ENCODE measurements at regions of chr1 and their contacts with region 1.

Region 1: DNA sequence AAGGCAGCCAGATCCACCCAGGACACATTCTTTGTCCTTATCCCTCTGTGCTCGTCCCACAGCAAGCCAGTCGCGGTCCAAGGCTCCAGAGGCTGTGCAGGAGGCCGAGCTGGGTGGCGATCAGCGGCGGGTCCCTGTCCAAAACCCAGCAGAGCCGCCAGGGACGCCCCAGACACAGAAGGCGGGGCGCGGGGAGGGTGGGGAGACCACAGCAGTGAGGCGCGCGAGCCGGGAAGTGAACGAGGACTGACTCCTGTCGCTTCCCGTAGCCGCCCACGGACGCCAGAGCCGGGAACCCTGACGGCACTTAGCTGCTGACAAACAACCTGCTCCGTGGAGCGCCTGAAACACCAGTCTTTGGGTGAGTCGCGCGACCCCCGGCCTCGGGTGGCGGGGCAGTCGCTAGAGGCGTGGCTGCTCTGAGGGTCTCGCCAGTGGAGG is at the start of gene LGALS8:
- DNase-seq: peak; percentile 68 to 87 (median 83)
- ATAC-seq: peak; percentile 90
- H3K4me3 ChIP-seq: peak within 1 kb of the TSS; percentile 70
- H3K4me3 Mint-ChIP-seq: peak within 1 kb of the TSS; percentile 93 to 100 (median 99)
- H3K27ac ChIP-seq: peak within 1 kb of the TSS; percentile 87
- H3K27ac Mint-ChIP-seq: peak within 1 kb of the TSS; percentile 97 to 99 (median 98)
- H3K4me1 ChIP-seq: peaks cover 4 to 5% of the 10 kb centered on the region in 2 donors
- H3K4me1 Mint-ChIP-seq: peaks cover 8 to 38% (median 35%) of the 10 kb centered on the region in 7 donors
- H3K27me3 ChIP-seq: no peaks in the 10 kb centered on the region
- H3K27me3 Mint-ChIP-seq: peaks cover 0 to 3% (median 0%) of the 10 kb centered on the region in 5 donors
- total RNA-seq, gene LGALS8: 114 to 143 (median 134) TPM

Region 2: DNA sequence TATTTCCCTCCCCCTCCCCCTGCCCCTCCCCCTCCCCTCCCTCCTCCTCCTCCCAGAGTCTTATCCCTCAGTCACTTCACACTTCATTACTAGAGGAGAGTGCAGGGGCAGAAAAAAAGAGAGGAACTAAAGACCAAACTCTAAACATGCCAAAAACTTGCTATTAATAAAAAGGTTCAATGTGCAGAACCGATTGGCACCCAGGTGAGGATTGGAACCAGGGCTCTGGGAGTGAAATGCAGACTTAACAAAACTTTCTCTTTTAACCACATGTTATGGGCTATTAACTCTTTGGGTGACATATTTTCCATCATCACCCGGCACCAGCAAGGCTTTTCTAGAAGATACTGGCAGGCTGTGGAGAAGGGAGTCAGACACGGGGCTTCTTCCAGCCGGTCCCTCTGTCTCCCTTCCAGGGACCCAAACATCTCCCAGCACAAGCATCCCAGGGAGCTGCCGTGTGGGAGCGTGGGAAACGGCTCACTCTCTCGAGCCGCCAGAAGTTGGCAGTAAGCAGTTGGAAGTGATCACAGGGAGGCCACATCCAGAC is 472.4 kb before region 1 on chr1:
- CTCF ChIA-PET with region 1: no interaction called
- POLR2A ChIA-PET with region 1: no interaction called
- intact Hi-C with region 1: no loop called
- DNase-seq: no peak
- ATAC-seq: no peak
- H3K4me3 ChIP-seq: no peak overlapping the region
- H3K4me3 Mint-ChIP-seq: no peak overlapping the region
- H3K27ac ChIP-seq: no peak overlapping the region
- H3K27ac Mint-ChIP-seq: no peak overlapping the region
- H3K4me1 ChIP-seq: no peaks in the 10 kb centered on the region
- H3K4me1 Mint-ChIP-seq: peaks cover 0 to 5% (median 0%) of the 10 kb centered on the region in 7 donors
- H3K27me3 ChIP-seq: peaks cover 0 to 3% of the 10 kb centered on the region in 2 donors
- H3K27me3 Mint-ChIP-seq: peaks cover 14 to 32% (median 20%) of the 10 kb centered on the region in 5 donors

Region 3: DNA sequence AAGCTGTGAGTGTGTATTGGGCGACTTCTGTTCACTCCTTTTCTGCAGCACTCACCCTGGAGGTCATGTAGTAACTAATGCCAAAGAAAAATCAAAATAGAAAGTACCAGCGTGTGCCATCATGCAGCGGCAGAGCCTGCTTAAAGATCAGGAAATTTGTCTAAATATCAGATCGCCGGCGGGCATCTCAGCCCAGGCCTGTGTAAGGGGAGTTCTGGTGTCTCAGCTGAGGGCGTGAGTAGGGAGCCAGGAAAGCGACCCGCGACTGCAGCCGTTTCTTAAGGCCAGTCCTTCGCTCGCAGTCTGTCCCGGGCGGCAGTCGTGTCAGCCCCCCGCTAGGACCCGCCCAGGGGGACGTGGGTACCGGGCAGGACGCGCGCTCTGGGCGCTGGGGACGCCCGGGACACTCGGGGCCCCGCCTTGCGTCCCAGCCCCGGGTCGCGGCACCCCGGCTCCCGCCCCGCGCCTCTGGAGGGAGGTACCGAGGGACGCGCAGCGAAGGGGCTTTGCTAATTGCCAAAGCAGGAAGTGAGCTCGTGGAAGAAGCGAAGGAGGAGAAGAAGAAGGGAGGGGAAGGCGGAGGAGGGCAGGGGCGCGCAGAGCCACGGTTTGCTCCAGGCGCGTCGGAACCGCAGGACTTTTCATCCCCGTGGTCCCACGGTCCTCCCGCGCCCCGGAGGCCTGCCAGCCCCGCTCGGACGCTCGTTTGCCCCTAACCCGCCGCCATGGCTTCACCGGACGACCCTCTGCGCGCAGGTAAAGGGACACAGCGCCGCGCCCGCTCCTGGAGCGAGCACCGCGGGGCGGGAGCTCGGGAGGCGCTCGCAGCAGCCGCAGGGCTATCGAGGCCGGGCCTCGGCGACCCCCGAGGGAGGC is 128.6 kb before region 1 on chr1:
- CTCF ChIA-PET with region 1: no interaction called
- POLR2A ChIA-PET with region 1: no interaction called
- intact Hi-C with region 1: loop called in 1 of 2 experiments (anchors 2 kb)
- DNase-seq: peak in 3 of 9 donors; percentile 13 to 62 (median 29)
- ATAC-seq: peak; percentile 75
- H3K4me3 ChIP-seq: peak overlapping the region; percentile 70
- H3K4me3 Mint-ChIP-seq: peak overlapping the region; percentile 70 to 96 (median 86)
- H3K27ac ChIP-seq: no peak overlapping the region
- H3K27ac Mint-ChIP-seq: peak overlapping the region in 1 of 9 donors; percentile 86
- H3K4me1 ChIP-seq: peaks cover 3 to 10% of the 10 kb centered on the region in 2 donors
- H3K4me1 Mint-ChIP-seq: peaks cover 15 to 43% (median 22%) of the 10 kb centered on the region in 7 donors
- H3K27me3 ChIP-seq: peaks cover 0 to 5% of the 10 kb centered on the region in 2 donors
- H3K27me3 Mint-ChIP-seq: peaks cover 27 to 67% (median 51%) of the 10 kb centered on the region in 5 donors

Region 4: DNA sequence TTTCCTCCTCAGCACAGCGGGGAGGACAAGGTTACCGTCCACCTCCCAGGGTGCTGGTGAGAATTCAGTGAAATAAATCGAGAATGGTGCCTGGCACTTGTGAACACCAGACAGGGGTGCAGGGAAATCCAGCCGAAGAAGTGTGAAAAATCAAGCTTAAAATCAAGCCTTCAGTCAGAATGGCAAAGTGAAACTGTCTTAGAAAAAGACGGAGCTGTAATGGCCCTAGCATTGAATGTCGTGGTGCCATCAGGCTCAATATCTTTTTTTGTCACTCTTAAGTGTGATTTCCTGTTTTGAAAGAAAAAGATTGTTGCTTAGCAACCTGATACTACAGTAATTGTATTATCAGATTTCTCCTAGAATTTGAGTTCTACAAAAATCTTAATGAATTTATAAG is 107.6 kb before region 1 on chr1:
- CTCF ChIA-PET with region 1: no interaction called
- POLR2A ChIA-PET with region 1: no interaction called
- intact Hi-C with region 1: loop called in 1 of 2 experiments (anchors 5 kb)
- DNase-seq: peak in 8 of 9 donors; percentile 13 to 75 (median 55)
- ATAC-seq: peak; percentile 94
- H3K4me3 ChIP-seq: peak overlapping the region; percentile 41
- H3K4me3 Mint-ChIP-seq: peak overlapping the region; percentile 13 to 77 (median 62)
- H3K27ac ChIP-seq: peak overlapping the region; percentile 52
- H3K27ac Mint-ChIP-seq: peak overlapping the region; percentile 73 to 95 (median 81)
- H3K4me1 ChIP-seq: peaks cover 11 to 26% of the 10 kb centered on the region in 2 donors
- H3K4me1 Mint-ChIP-seq: peaks cover 8 to 17% (median 10%) of the 10 kb centered on the region in 7 donors
- H3K27me3 ChIP-seq: no peaks in the 10 kb centered on the region
- H3K27me3 Mint-ChIP-seq: no peaks in the 10 kb centered on the region

Region 5: DNA sequence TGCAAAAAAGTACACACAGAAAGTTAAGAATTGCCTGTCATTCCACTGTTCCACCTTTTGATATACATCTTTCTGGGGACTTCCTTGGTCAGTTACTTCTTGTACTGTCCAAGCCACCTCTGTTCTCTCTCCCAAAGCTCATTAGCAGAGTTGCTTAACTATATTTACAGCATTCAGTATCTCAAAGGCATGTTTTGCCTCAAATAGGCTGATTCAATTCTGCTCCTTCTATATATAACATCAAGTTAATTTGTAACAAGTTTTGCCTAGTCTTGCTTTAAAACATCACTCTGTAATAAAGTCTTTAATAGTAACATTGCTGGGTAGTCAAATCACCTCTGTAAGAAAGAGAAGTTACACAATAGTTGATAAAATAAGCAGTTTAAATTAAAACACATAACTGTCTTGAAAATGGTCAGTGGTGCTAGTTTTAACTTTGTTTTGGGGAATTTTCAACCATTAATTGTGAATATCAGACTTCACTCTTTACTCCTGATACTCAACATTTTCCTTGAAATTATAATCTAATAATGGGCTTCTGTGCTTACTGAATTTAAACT is 93.9 kb before region 1 on chr1:
- CTCF ChIA-PET with region 1: no interaction called
- POLR2A ChIA-PET with region 1: no interaction called
- intact Hi-C with region 1: no loop called
- DNase-seq: no peak
- ATAC-seq: no peak
- H3K4me3 ChIP-seq: no peak overlapping the region
- H3K4me3 Mint-ChIP-seq: no peak overlapping the region
- H3K27ac ChIP-seq: no peak overlapping the region
- H3K27ac Mint-ChIP-seq: no peak overlapping the region
- H3K4me1 ChIP-seq: no peaks in the 10 kb centered on the region
- H3K4me1 Mint-ChIP-seq: peaks cover 0 to 9% (median 0%) of the 10 kb centered on the region in 7 donors
- H3K27me3 ChIP-seq: no peaks in the 10 kb centered on the region
- H3K27me3 Mint-ChIP-seq: no peaks in the 10 kb centered on the region

Region 6: DNA sequence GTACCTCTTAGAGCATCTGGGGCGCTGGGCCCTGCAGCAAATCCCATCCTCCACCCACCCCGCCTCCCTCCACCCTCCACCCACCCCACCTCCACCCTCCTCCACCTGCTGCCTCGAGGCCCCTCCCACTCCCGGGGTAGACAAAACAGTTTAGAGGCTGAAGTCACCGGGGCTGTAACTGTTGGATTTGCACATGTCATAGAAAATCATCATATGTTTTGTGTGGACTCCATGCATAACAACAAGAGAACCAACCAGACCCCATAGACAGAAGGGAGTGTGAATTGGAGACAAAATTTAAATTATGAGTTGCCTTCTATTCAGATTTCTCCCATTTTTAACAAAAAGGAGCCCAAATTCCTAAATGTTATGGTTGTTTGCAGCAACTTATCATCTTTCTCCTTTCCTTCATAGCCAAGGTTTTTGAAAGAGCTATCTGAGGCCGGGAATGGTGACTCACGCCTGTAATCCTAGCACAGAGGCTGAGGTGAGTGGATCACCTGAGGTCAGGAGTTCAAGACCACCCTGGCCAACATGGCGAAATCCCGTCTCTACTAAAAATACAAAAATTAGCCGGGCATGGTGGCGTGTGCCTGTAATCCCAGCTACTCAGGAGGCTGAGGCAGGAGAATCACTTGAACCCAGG is 28.1 kb before region 1 on chr1:
- CTCF ChIA-PET with region 1: no interaction called
- POLR2A ChIA-PET with region 1: no interaction called
- intact Hi-C with region 1: no loop called
- DNase-seq: no peak
- ATAC-seq: no peak
- H3K4me3 ChIP-seq: no peak overlapping the region
- H3K4me3 Mint-ChIP-seq: no peak overlapping the region
- H3K27ac ChIP-seq: no peak overlapping the region
- H3K27ac Mint-ChIP-seq: peak overlapping the region in 1 of 9 donors; percentile 20
- H3K4me1 ChIP-seq: no peaks in the 10 kb centered on the region
- H3K4me1 Mint-ChIP-seq: peaks cover 5 to 17% (median 7%) of the 10 kb centered on the region in 7 donors
- H3K27me3 ChIP-seq: no peaks in the 10 kb centered on the region
- H3K27me3 Mint-ChIP-seq: peaks cover 9 to 23% (median 15%) of the 10 kb centered on the region in 5 donors

Region 7: DNA sequence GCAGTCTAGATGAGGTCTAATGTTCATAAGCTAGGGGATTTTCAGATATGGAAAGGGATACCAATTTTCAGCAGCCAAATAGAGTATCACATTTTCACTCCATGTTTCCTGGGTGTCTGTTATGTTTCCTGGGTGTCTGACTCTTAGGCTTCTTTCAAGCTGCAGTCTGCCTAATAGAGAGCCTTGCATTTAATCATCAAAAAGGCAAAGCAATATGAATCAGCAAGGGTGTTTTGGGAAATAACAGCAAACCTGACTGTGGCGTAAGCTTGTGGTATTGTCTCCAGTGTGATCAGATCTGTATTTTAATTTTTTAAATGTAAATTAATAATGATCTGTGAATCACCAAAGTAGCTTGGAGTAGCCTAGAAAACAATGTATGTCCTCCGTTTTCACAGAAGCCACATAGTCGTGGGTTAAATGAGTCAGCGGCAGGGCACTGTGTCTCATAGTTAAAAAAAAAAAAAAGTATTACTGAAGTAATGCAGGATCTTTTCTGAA is 10.5 kb after region 1 on chr1:
- CTCF ChIA-PET with region 1: no interaction called
- POLR2A ChIA-PET with region 1: interaction called, 5 read pairs
- intact Hi-C with region 1: loop called in 1 of 2 experiments (anchors 1 kb)
- DNase-seq: no peak
- ATAC-seq: peak; percentile 23
- H3K4me3 ChIP-seq: no peak overlapping the region
- H3K4me3 Mint-ChIP-seq: peak overlapping the region in 3 of 10 donors; percentile 45 to 50 (median 47)
- H3K27ac ChIP-seq: no peak overlapping the region
- H3K27ac Mint-ChIP-seq: peak overlapping the region in 7 of 9 donors; percentile 16 to 85 (median 68)
- H3K4me1 ChIP-seq: peaks cover 4 to 7% of the 10 kb centered on the region in 2 donors
- H3K4me1 Mint-ChIP-seq: peaks cover 26 to 47% (median 45%) of the 10 kb centered on the region in 7 donors
- H3K27me3 ChIP-seq: no peaks in the 10 kb centered on the region
- H3K27me3 Mint-ChIP-seq: no peaks in the 10 kb centered on the region